ENCODE measurements at regions of chr3 and their contacts with region 1.

Region 1: GRCh38 chr3:103499132-103499900 is 1064.5 kb downstream of the ZPLD1 start:
- DNase-seq: peak; percentile 75
- H3K4me3 ChIP-seq: no peak overlapping the region
- H3K27ac ChIP-seq: peak overlapping the region; percentile 96
- H3K4me1 ChIP-seq: peaks cover 53% of the 10 kb centered on the region
- H3K27me3 ChIP-seq: no peaks in the 10 kb centered on the region
- CTCF ChIP-seq: no peak

Region 2: DNA sequence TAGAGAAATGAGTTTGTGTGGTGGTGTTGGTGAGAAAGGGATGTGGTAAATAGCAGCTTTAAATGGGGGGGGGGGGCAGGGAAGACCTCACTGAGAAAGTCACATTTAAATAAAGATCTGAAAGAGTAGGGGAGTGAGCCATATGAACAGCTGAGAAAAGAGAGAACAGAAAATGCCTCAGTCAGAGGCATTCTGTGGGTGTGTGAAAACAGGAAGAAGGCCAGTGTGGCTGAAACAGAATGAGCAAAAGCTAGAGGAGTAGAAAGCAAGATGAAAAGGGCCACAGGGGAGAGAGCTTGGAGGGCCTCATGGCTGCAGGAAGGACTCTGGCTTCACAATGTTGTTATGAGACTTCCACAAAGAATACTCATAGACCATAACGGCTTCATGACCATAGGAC is 281.2 kb before region 1 on chr3:
- CTCF ChIA-PET with region 1: no interaction called
- POLR2A ChIA-PET with region 1: no interaction called
- intact Hi-C with region 1: loop called (anchors 10 kb)
- DNase-seq: no peak
- H3K4me3 ChIP-seq: no peak overlapping the region
- H3K27ac ChIP-seq: no peak overlapping the region
- H3K4me1 ChIP-seq: no peaks in the 10 kb centered on the region
- H3K27me3 ChIP-seq: no peaks in the 10 kb centered on the region
- CTCF ChIP-seq: no peak

Region 3: DNA sequence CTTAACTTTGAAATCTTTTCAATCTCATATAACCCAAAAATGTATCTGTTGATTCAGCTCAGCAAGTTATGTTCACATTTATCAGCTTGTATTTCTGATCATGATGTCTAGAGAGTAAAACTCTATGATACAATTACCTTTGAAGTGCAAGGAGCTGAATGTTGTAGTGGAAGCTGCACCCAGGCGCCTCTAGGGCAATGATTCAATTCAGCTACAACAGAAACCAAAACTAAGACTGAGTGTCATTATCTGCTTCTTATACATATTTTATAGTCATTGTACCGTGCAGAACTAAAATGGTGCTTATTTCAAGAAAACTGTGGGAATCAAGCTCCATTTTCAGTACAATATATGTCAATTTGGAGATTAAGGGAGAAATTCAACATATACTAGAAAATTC is 173.0 kb after region 1 on chr3:
- CTCF ChIA-PET with region 1: no interaction called
- POLR2A ChIA-PET with region 1: no interaction called
- intact Hi-C with region 1: loop called (anchors 5 kb)
- DNase-seq: no peak
- H3K4me3 ChIP-seq: no peak overlapping the region
- H3K27ac ChIP-seq: no peak overlapping the region
- H3K4me1 ChIP-seq: no peaks in the 10 kb centered on the region
- H3K27me3 ChIP-seq: no peaks in the 10 kb centered on the region
- CTCF ChIP-seq: no peak

Region 4: DNA sequence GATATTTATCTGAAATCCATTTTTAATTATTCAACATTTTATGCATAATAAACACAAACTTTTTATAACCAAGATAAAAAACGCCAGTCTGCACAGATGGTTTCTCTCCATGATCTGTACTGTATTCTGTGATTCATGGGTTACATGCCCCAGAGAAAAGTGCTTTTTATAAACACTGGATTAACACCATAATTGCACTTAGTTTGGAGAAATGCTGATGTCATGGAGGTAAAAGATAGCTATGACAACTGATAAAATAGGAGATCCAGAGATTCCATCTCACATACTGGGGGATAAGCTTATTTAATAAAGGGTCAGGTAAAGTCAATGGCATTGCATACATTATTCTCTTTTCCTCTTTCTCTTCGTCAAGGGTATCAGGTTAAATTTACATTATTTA is 407.0 kb after region 1 on chr3:
- CTCF ChIA-PET with region 1: no interaction called
- POLR2A ChIA-PET with region 1: no interaction called
- intact Hi-C with region 1: loop called (anchors 10 kb)
- DNase-seq: peak; percentile 65
- H3K4me3 ChIP-seq: peak overlapping the region; percentile 9
- H3K27ac ChIP-seq: peak overlapping the region; percentile 67
- H3K4me1 ChIP-seq: peaks cover 22% of the 10 kb centered on the region
- H3K27me3 ChIP-seq: no peaks in the 10 kb centered on the region
- CTCF ChIP-seq: no peak

Measured in A673 (cell line).